ENCODE measurements at regions of chr9 and their contacts with region 1.

Region 1: GRCh38 chr9:94166237-94166963 is 82.1 kb downstream of the PTPDC1 start:
- DNase-seq: peak; percentile 98
- H3K4me3 Mint-ChIP-seq: peak overlapping the region; percentile 90
- H3K27ac Mint-ChIP-seq: peak overlapping the region; percentile 88
- H3K4me1 Mint-ChIP-seq: peaks cover 37% of the 10 kb centered on the region
- H3K27me3 Mint-ChIP-seq: no peaks in the 10 kb centered on the region

Region 2: DNA sequence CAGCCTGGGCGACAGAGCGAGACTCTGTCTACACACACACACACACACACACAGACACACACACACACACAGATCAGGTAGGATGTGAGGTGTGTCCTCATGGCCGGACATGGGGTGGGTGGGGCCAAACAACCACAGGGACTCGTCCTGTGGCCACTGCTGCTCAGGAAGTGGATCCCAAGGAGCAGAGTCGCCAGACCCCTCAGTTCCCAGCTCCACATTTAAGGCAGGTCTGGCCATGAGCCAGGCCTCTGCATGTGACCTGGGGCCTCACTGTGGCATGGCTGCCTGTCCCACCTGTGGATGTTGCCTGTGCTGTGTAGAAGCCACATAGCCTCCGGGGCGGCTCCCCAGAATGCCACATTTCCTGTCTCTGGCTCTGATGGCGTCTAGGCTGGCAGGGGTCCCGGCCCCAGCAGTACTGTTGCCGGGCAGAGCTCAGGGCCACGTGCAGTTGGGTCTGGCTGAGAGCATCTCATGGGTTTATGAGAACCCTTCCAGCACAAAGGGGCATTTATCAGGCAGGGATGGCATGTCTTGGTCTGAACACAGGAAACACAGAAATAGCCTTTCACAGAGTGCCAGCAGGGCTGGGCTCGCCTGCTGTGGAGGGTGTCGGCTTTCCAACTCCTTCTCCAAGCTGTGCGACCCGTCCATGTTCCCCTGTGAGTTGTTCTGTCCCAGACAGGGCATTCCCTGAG is 1022.4 kb before region 1 on chr9:
- intact Hi-C with region 1: loop called (anchors 5 kb)
- DNase-seq: peak; percentile 85
- H3K4me3 Mint-ChIP-seq: peak overlapping the region; percentile 60
- H3K27ac Mint-ChIP-seq: peak overlapping the region; percentile 96
- H3K4me1 Mint-ChIP-seq: peaks cover 41% of the 10 kb centered on the region
- H3K27me3 Mint-ChIP-seq: no peaks in the 10 kb centered on the region

Region 3: GRCh38 chr9:94030318-94031179 is 135.9 kb before region 1 on chr9:
- intact Hi-C with region 1: loop called (anchors 2 kb)
- DNase-seq: peak; percentile 95
- H3K4me3 Mint-ChIP-seq: peak overlapping the region; percentile 100
- H3K27ac Mint-ChIP-seq: peak overlapping the region; percentile 97
- H3K4me1 Mint-ChIP-seq: peaks cover 18% of the 10 kb centered on the region
- H3K27me3 Mint-ChIP-seq: peaks cover 8% of the 10 kb centered on the region

Region 4: GRCh38 chr9:94178927-94179326 is 12.5 kb after region 1 on chr9:
- intact Hi-C with region 1: loop called (anchors 1 kb)
- DNase-seq: no peak
- H3K4me3 Mint-ChIP-seq: no peak overlapping the region
- H3K27ac Mint-ChIP-seq: peak overlapping the region; percentile 85
- H3K4me1 Mint-ChIP-seq: peaks cover 37% of the 10 kb centered on the region
- H3K27me3 Mint-ChIP-seq: no peaks in the 10 kb centered on the region

Region 5: GRCh38 chr9:94259077-94259892 is 92.9 kb after region 1 on chr9 and contains the start of gene ZNF169:
- intact Hi-C with region 1: loop called (anchors 1 kb)
- DNase-seq: peak; percentile 96
- H3K4me3 Mint-ChIP-seq: peak within 1 kb of the TSS; percentile 99
- H3K27ac Mint-ChIP-seq: peak within 1 kb of the TSS; percentile 98
- H3K4me1 Mint-ChIP-seq: peaks cover 15% of the 10 kb centered on the region
- H3K27me3 Mint-ChIP-seq: peaks cover 14% of the 10 kb centered on the region
- total RNA-seq, gene ZNF169: 7.1 and 9.4 TPM in 2 replicates